Gastrocnemius medialis (tissue), 4 donors: ENCODE measurements at regions of chr20 and their contacts with region 1.

Region 1: GRCh38 chr20:37726971-37727956 is 33.4 kb downstream of the CTNNBL1 start:
- DNase-seq: peak in 1 of 2 donors; percentile 19
- ATAC-seq: peak; percentile 68 to 83
- H3K4me3 ChIP-seq: no peak overlapping the region
- H3K27ac ChIP-seq: peak overlapping the region; percentile 60 to 80 (median 67)
- H3K4me1 ChIP-seq: peaks cover 52 to 63% of the 10 kb centered on the region in 2 donors
- H3K27me3 ChIP-seq: no peaks in the 10 kb centered on the region
- CTCF ChIP-seq: no peak
- POLR2A ChIP-seq: no peak

Region 2: GRCh38 chr20:37693635-37694626 is 33.3 kb before region 1 on chr20 and contains the start of gene CTNNBL1:
- in situ Hi-C with region 1: no loop called
- intact Hi-C with region 1: loop called (anchors 2 kb)
- DNase-seq: peak; percentile 94 to 97
- ATAC-seq: peak; percentile 97 to 99
- H3K4me3 ChIP-seq: peak within 1 kb of the TSS; percentile 67 to 93 (median 84)
- H3K27ac ChIP-seq: peak within 1 kb of the TSS; percentile 77 to 79 (median 78)
- H3K4me1 ChIP-seq: peaks cover 12 to 18% of the 10 kb centered on the region in 2 donors
- H3K27me3 ChIP-seq: no peaks in the 10 kb centered on the region
- CTCF ChIP-seq: peak in 3 of 5 experiments; percentile 10 to 27 (median 17)
- POLR2A ChIP-seq: peak; percentile 62 to 76
- total RNA-seq, gene CTNNBL1: 23.1 to 35.4 (median 30.3) TPM

Region 3: GRCh38 chr20:37777012-37777950 is 50.0 kb after region 1 on chr20:
- in situ Hi-C with region 1: no loop called
- intact Hi-C with region 1: loop called (anchors 5 kb)
- DNase-seq: no peak
- ATAC-seq: no peak
- H3K4me3 ChIP-seq: no peak overlapping the region
- H3K27ac ChIP-seq: no peak overlapping the region
- H3K4me1 ChIP-seq: peaks cover 39 to 62% of the 10 kb centered on the region in 2 donors
- H3K27me3 ChIP-seq: no peaks in the 10 kb centered on the region
- CTCF ChIP-seq: no peak
- POLR2A ChIP-seq: no peak

Region 4: DNA sequence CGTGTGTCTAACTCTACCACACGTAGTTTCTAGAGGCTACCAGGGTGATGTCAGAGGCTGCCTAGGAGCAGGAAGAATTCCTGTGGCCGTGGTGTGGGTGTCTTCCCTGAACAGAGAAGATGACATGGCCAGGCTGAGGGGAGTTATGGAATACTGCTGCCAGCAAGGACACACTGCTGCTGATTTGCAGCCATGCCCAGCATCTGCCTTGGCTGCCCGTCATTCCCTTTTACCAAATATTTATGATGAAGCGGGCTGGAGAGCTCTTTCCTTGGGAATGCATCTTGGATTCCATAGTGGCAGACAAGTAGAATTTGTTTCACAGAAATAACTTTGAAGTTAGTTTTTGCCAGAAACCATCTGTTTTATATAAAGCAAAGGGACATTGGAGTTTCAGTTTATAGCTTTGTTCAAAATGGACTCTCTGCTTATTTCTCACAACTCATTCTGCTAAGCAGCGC is 94.9 kb after region 1 on chr20:
- in situ Hi-C with region 1: no loop called
- intact Hi-C with region 1: no loop called
- DNase-seq: no peak
- ATAC-seq: no peak
- H3K4me3 ChIP-seq: no peak overlapping the region
- H3K27ac ChIP-seq: no peak overlapping the region
- H3K4me1 ChIP-seq: no peaks in the 10 kb centered on the region
- H3K27me3 ChIP-seq: no peaks in the 10 kb centered on the region
- CTCF ChIP-seq: no peak
- POLR2A ChIP-seq: no peak